Natural killer cell (primary cell): ENCODE measurements at regions of chr6 and their contacts with region 1.

Region 1: DNA sequence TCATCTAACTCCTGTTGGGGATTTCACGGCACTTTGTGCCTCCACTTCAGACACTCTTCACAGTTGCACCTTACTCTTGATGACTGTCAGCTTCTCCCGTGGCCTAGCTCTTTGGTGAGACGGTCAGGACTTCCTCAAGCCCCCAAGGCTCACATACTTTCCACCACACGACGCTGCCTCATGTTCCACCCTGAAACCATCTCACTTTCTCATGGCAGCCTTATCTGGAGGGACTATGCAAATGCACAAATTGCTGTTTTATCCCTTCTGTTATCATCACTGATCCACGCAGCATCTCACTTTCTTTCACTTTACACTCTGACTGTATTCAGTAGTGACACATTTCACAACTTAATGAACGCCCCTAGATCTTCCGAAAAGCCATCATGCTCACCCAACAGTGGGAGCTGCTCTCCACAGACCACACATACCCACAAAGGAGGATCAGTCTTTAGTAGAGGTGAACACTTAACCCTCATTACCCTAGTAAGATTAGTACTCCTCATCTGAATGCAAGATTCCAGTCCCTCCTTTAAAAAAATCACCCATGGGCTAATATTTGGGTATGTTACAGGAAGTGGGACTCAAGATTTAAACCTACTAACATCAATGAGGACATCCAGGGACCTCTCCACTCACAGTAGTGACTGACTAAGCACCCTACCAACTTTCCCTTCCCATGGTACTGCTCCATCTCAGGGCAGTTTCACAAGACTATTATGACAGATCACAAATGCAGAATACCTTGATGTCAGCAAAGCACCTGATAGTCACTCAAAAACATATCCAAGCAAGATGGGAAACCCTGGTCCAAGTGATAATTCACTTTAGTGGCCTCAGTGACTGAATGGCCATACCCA is 35.4 kb downstream of the FYN start:
- DNase-seq: peak; percentile 40 to 72
- ATAC-seq: peak; percentile 69 to 82 (median 72)
- H3K4me3 ChIP-seq: no peak overlapping the region
- H3K4me3 Mint-ChIP-seq: peak overlapping the region; percentile 70
- H3K27ac ChIP-seq: peak overlapping the region; percentile 89
- H3K27ac Mint-ChIP-seq: no peak overlapping the region
- H3K4me1 ChIP-seq: peaks cover 68% of the 10 kb centered on the region
- H3K4me1 Mint-ChIP-seq: peaks cover 34 to 36% of the 10 kb centered on the region in 2 donors
- H3K27me3 ChIP-seq: no peaks in the 10 kb centered on the region
- H3K27me3 Mint-ChIP-seq: no peaks in the 10 kb centered on the region
- CTCF ChIP-seq: no peak

Region 2: GRCh38 chr6:111715321-111715720 is 122.5 kb before region 1 on chr6:
- intact Hi-C with region 1: loop called (anchors 2 kb)
- DNase-seq: peak in 1 of 2 donors; percentile 75
- ATAC-seq: peak in 2 of 3 donors; percentile 19 to 25
- H3K4me3 ChIP-seq: no peak overlapping the region
- H3K4me3 Mint-ChIP-seq: peak overlapping the region; percentile 79
- H3K27ac ChIP-seq: peak overlapping the region; percentile 82
- H3K27ac Mint-ChIP-seq: peak overlapping the region; percentile 98 to 100
- H3K4me1 ChIP-seq: peaks cover 44% of the 10 kb centered on the region
- H3K4me1 Mint-ChIP-seq: peaks cover 74 to 76% of the 10 kb centered on the region in 2 donors
- H3K27me3 ChIP-seq: no peaks in the 10 kb centered on the region
- H3K27me3 Mint-ChIP-seq: no peaks in the 10 kb centered on the region
- CTCF ChIP-seq: no peak

Region 3: DNA sequence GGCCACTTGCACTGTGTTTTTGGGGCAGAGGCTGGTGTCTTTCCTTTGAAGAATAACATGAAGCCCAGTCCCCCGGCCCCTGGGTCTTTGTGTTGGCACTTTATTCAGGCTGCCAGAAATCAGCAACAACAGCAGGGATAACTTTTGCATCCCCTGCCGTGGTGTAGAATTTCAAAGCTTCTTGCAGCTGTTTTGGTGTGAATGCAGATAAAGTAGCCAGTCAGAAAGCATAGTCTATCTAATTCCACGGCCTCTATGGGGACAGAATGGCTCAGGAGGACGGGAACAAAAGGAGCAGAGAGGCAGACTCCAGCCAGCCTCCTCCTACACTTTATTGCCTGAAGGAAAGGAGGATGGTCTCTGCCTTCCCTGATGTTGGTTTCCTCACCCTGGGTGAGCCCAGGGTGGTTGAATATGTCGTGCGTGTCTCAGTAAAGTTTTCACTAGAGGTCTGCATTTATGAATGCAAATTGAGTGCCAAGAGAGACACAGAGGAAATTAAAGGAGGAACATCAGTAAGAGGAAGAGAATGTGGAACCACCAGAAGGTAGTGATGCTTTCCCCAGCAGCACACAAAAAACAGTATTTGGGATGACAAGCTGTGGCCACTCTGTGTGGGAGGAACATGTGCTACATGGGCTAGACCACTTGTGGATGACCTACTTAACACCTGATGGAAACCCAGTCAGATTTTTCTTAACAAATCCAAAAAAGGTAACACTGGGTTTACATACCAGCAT is 106.2 kb before region 1 on chr6:
- intact Hi-C with region 1: loop called (anchors 5 kb)
- DNase-seq: peak; percentile 48 to 55
- ATAC-seq: peak; percentile 63 to 82 (median 74)
- H3K4me3 ChIP-seq: no peak overlapping the region
- H3K4me3 Mint-ChIP-seq: peak overlapping the region; percentile 62
- H3K27ac ChIP-seq: peak overlapping the region; percentile 84
- H3K27ac Mint-ChIP-seq: peak overlapping the region; percentile 90 to 100
- H3K4me1 ChIP-seq: peaks cover 77% of the 10 kb centered on the region
- H3K4me1 Mint-ChIP-seq: peaks cover 93 to 96% of the 10 kb centered on the region in 2 donors
- H3K27me3 ChIP-seq: no peaks in the 10 kb centered on the region
- H3K27me3 Mint-ChIP-seq: no peaks in the 10 kb centered on the region
- CTCF ChIP-seq: no peak

Region 4: GRCh38 chr6:111750753-111751684 is 86.9 kb before region 1 on chr6:
- intact Hi-C with region 1: loop called (anchors 5 kb)
- DNase-seq: peak; percentile 53 to 92
- ATAC-seq: peak; percentile 70 to 83 (median 80)
- H3K4me3 ChIP-seq: no peak overlapping the region
- H3K4me3 Mint-ChIP-seq: peak overlapping the region; percentile 86
- H3K27ac ChIP-seq: peak overlapping the region; percentile 99
- H3K27ac Mint-ChIP-seq: peak overlapping the region; percentile 92 to 100
- H3K4me1 ChIP-seq: peaks cover 57% of the 10 kb centered on the region
- H3K4me1 Mint-ChIP-seq: peaks cover 95 to 96% of the 10 kb centered on the region in 2 donors
- H3K27me3 ChIP-seq: no peaks in the 10 kb centered on the region
- H3K27me3 Mint-ChIP-seq: no peaks in the 10 kb centered on the region
- CTCF ChIP-seq: no peak

Region 5: GRCh38 chr6:111764238-111765175 is 73.4 kb before region 1 on chr6:
- intact Hi-C with region 1: loop called (anchors 2 kb)
- DNase-seq: peak; percentile 60 to 86
- ATAC-seq: peak; percentile 41 to 43 (median 41)
- H3K4me3 ChIP-seq: no peak overlapping the region
- H3K4me3 Mint-ChIP-seq: peak overlapping the region; percentile 95
- H3K27ac ChIP-seq: peak overlapping the region; percentile 99
- H3K27ac Mint-ChIP-seq: peak overlapping the region; percentile 99 to 100
- H3K4me1 ChIP-seq: peaks cover 82% of the 10 kb centered on the region
- H3K4me1 Mint-ChIP-seq: peaks cover 99 to 100% of the 10 kb centered on the region in 2 donors
- H3K27me3 ChIP-seq: no peaks in the 10 kb centered on the region
- H3K27me3 Mint-ChIP-seq: no peaks in the 10 kb centered on the region
- CTCF ChIP-seq: no peak

Region 6: DNA sequence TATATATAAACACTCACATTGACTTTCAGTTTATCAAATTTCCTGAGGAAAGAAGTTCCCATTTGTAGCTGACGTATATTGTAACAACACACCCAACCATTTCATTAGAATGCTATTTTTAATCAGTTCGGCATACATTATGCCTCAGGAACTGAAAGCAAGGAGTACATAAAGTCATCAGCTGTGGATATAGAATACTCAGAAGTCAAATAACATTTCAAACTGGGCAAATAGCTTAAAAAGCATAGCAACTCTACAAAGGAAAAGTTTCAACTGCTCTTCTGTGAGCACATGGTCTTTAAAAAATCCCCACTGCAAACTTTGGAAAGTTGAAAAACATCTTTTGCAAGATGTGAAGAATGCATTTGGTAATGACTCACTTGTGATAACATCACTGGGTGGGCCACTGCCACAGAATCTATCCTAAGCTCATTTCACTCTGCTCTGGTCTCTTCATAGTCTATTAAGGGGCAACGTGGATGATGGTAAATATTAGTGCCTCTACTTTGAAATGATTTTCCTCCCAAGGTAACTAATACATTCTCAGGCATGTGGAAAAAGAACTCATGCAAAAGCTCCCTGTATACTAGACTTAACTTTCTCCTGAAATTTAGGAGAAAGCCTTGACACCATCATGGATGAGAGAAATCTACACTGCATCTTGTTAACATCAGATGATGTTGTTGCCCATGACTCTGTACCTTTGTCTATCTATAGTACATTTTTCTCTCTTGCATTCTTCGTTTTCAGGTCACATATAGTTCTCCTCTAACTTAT is 13.9 kb before region 1 on chr6:
- intact Hi-C with region 1: loop called (anchors 1 kb)
- DNase-seq: peak in 1 of 2 donors; percentile 74
- ATAC-seq: peak; percentile 77 to 84 (median 78)
- H3K4me3 ChIP-seq: no peak overlapping the region
- H3K4me3 Mint-ChIP-seq: peak overlapping the region; percentile 72
- H3K27ac ChIP-seq: peak overlapping the region; percentile 62
- H3K27ac Mint-ChIP-seq: peak overlapping the region in 1 of 2 donors; percentile 83
- H3K4me1 ChIP-seq: peaks cover 21% of the 10 kb centered on the region
- H3K4me1 Mint-ChIP-seq: peaks cover 63 to 75% of the 10 kb centered on the region in 2 donors
- H3K27me3 ChIP-seq: no peaks in the 10 kb centered on the region
- H3K27me3 Mint-ChIP-seq: no peaks in the 10 kb centered on the region
- CTCF ChIP-seq: no peak

Region 7: GRCh38 chr6:111997078-111997852 is 159.4 kb after region 1 on chr6:
- intact Hi-C with region 1: loop called (anchors 10 kb)
- DNase-seq: peak; percentile 66 to 93
- ATAC-seq: peak; percentile 81 to 90 (median 86)
- H3K4me3 ChIP-seq: no peak overlapping the region
- H3K4me3 Mint-ChIP-seq: peak overlapping the region; percentile 18
- H3K27ac ChIP-seq: no peak overlapping the region
- H3K27ac Mint-ChIP-seq: peak overlapping the region; percentile 27 to 61
- H3K4me1 ChIP-seq: peaks cover 23% of the 10 kb centered on the region
- H3K4me1 Mint-ChIP-seq: peaks cover 30 to 33% of the 10 kb centered on the region in 2 donors
- H3K27me3 ChIP-seq: no peaks in the 10 kb centered on the region
- H3K27me3 Mint-ChIP-seq: no peaks in the 10 kb centered on the region
- CTCF ChIP-seq: peak; percentile 94